GM12878 (cell line): ENCODE measurements at regions of chr4 and their contacts with region 1.

Region 1: DNA sequence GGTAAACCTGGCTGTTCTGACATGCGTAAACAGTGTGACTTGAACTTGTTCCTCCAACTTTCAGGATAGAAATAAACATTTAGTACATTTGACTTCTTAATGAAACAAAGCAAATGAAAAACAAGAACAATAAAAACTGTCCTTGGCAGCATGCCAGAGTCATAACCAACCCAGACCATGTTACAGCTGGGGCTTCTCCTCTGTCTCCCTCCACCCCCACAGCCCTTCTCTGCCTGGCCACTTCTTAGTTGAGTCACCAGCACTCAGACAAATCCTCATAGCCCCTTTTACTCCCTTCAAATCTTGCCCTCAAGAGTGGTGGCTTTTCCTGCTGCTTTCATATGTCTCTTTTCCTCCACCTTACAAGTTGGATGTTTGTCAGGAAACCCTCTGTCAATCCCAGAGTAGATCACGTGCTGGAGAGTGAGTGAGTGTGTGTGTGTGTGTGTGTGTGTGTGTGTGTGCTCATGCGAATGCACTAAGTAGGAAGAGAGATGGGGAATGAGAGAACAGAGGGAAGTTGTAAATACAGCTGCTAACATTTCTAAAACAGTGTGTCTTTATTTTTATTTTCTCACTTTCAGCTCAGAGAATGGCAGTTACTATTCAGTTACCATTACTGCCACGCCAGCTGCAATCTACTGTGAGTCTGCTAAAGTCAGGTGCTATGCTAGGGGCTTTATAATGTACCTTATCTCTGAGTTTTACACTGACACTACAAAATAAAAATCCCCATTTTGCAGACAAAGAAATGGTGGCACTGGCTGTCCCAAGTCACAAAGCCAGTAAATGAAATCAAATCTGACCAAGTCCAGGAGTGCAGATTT is 15.0 kb downstream of the SCARB2 start:
- DNase-seq: peak; percentile 87
- ATAC-seq: peak; percentile 74
- H3K4me3 ChIP-seq: peak overlapping the region; percentile 24
- H3K27ac ChIP-seq: peak overlapping the region; percentile 95
- H3K4me1 ChIP-seq: peaks cover 58% of the 10 kb centered on the region
- H3K27me3 ChIP-seq: no peaks in the 10 kb centered on the region
- CTCF ChIP-seq: no peak
- EP300 ChIP-seq: peak; percentile 5 to 25; a peak in 1 of 4 replicates
- POLR2A ChIP-seq: no peak
- RAD21 ChIP-seq: no peak

Region 2: GRCh38 chr4:76213415-76214176 is 15.0 kb after region 1 on chr4 and contains the start of gene SCARB2:
- CTCF ChIA-PET with region 1: interaction called, 37 read pairs
- POLR2A ChIA-PET with region 1: interaction called, 6 read pairs
- RAD21 ChIA-PET with region 1: interaction called, 22 read pairs
- SMC1A ChIA-PET with region 1: interaction called, 54 read pairs
- in situ Hi-C with region 1: no loop called
- intact Hi-C with region 1: loop called (anchors 2 kb)
- DNase-seq: no peak
- ATAC-seq: peak; percentile 89
- H3K4me3 ChIP-seq: peak within 1 kb of the TSS; percentile 78
- H3K27ac ChIP-seq: peak within 1 kb of the TSS; percentile 60
- H3K4me1 ChIP-seq: peaks cover 19% of the 10 kb centered on the region
- H3K27me3 ChIP-seq: no peaks in the 10 kb centered on the region
- CTCF ChIP-seq: no peak
- EP300 ChIP-seq: no peak
- POLR2A ChIP-seq: peak; percentile 76
- RAD21 ChIP-seq: no peak
- polyA plus RNA-seq, gene SCARB2: 2.1 to 3.7 TPM

Region 3: GRCh38 chr4:76301068-76301774 is 102.6 kb after region 1 on chr4:
- CTCF ChIA-PET with region 1: no interaction called
- POLR2A ChIA-PET with region 1: no interaction called
- RAD21 ChIA-PET with region 1: no interaction called
- SMC1A ChIA-PET with region 1: no interaction called
- in situ Hi-C with region 1: no loop called
- intact Hi-C with region 1: loop called (anchors 1 kb)
- DNase-seq: peak; percentile 74
- ATAC-seq: peak; percentile 99
- H3K4me3 ChIP-seq: no peak overlapping the region
- H3K27ac ChIP-seq: peak overlapping the region; percentile 34; the same call in 1 of the 2 replicates
- H3K4me1 ChIP-seq: peaks cover 24% of the 10 kb centered on the region
- H3K27me3 ChIP-seq: peaks cover 3 to 5% of the 10 kb centered on the region in 2 experiments; a peak in 3 of 4 replicates
- CTCF ChIP-seq: 0 out of 6 replicates have a peak, but pooled peaks of 1 of the 3 experiments have one; percentile 9
- EP300 ChIP-seq: peak in 1 of 2 experiments; percentile 35; a peak in 1 of 4 replicates
- POLR2A ChIP-seq: no peak
- RAD21 ChIP-seq: peak; percentile 21; the same call in 1 of the 2 replicates

Region 4: DNA sequence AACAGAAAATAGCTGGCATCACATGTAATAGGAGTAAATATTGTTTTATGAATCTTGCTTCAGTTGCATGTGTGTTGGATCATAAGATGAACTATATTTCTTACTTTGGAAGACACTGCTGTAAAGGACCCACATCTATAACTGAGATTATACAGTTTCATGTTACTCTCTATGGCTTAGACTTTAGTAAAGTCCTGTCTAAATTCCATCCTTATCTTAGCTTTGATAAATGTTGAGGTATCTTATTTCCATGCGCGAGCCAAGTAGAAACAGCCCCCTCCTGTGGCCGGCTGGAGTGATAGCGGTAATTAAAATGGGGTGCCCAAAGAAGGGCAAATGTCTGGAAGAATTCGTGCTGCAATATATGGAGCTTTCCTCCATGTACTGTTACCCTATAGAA is 179.3 kb after region 1 on chr4:
- CTCF ChIA-PET with region 1: interaction called, 6 read pairs
- POLR2A ChIA-PET with region 1: no interaction called
- RAD21 ChIA-PET with region 1: interaction called, 13 read pairs
- SMC1A ChIA-PET with region 1: interaction called, 10 read pairs
- in situ Hi-C with region 1: no loop called
- intact Hi-C with region 1: no loop called
- DNase-seq: no peak
- ATAC-seq: peak; percentile 32; the same call in 1 of the 3 replicates
- H3K4me3 ChIP-seq: no peak overlapping the region
- H3K27ac ChIP-seq: no peak overlapping the region
- H3K4me1 ChIP-seq: no peaks in the 10 kb centered on the region
- H3K27me3 ChIP-seq: no peaks in the 10 kb centered on the region; a peak in 2 of 4 replicates
- CTCF ChIP-seq: peak; percentile 49 to 52 (median 52); a peak in 5 of 6 replicates
- EP300 ChIP-seq: no peak
- POLR2A ChIP-seq: no peak
- RAD21 ChIP-seq: peak; percentile 84